ENCODE measurements at regions of chr14 and their contacts with region 1.

Region 1: GRCh38 chr14:70907176-70907995 is at the start of gene PCNX1:
- DNase-seq: peak; percentile 86
- ATAC-seq: peak; percentile 69
- H3K4me3 ChIP-seq: peak within 1 kb of the TSS; percentile 76
- H3K27ac ChIP-seq: peak within 1 kb of the TSS; percentile 21; the same call in 1 of the 2 replicates
- H3K4me1 ChIP-seq: peaks cover 19% of the 10 kb centered on the region
- H3K27me3 ChIP-seq: no peaks in the 10 kb centered on the region
- CTCF ChIP-seq: peak; percentile 82
- total RNA-seq, gene PCNX1: 21.5 and 23.3 TPM in 2 replicates

Region 2: GRCh38 chr14:70359181-70360090 is 548.0 kb before region 1 on chr14 and contains the start of gene COX16:
- CTCF ChIA-PET with region 1: no interaction called
- POLR2A ChIA-PET with region 1: no interaction called
- intact Hi-C with region 1: loop called (anchors 2 kb)
- DNase-seq: peak; percentile 96
- ATAC-seq: peak; percentile 93
- H3K4me3 ChIP-seq: peak within 1 kb of the TSS; percentile 88
- H3K27ac ChIP-seq: peak within 1 kb of the TSS; percentile 71
- H3K4me1 ChIP-seq: peaks cover 19% of the 10 kb centered on the region
- H3K27me3 ChIP-seq: no peaks in the 10 kb centered on the region
- CTCF ChIP-seq: no peak
- total RNA-seq, gene COX16: 54.1 and 60.1 TPM in 2 replicates

Region 3: GRCh38 chr14:70827396-70828151 is 79.8 kb before region 1 on chr14:
- CTCF ChIA-PET with region 1: interaction called, 7 read pairs
- POLR2A ChIA-PET with region 1: no interaction called
- intact Hi-C with region 1: loop called (anchors 1 kb)
- DNase-seq: peak; percentile 61
- ATAC-seq: peak; percentile 85
- H3K4me3 ChIP-seq: no peak overlapping the region
- H3K27ac ChIP-seq: no peak overlapping the region
- H3K4me1 ChIP-seq: 0 out of 2 replicates have a peak, but pooled peaks cover 2% of the 10 kb centered on the region
- H3K27me3 ChIP-seq: no peaks in the 10 kb centered on the region
- CTCF ChIP-seq: peak; percentile 49; the same call in 1 of the 2 replicates

Region 4: DNA sequence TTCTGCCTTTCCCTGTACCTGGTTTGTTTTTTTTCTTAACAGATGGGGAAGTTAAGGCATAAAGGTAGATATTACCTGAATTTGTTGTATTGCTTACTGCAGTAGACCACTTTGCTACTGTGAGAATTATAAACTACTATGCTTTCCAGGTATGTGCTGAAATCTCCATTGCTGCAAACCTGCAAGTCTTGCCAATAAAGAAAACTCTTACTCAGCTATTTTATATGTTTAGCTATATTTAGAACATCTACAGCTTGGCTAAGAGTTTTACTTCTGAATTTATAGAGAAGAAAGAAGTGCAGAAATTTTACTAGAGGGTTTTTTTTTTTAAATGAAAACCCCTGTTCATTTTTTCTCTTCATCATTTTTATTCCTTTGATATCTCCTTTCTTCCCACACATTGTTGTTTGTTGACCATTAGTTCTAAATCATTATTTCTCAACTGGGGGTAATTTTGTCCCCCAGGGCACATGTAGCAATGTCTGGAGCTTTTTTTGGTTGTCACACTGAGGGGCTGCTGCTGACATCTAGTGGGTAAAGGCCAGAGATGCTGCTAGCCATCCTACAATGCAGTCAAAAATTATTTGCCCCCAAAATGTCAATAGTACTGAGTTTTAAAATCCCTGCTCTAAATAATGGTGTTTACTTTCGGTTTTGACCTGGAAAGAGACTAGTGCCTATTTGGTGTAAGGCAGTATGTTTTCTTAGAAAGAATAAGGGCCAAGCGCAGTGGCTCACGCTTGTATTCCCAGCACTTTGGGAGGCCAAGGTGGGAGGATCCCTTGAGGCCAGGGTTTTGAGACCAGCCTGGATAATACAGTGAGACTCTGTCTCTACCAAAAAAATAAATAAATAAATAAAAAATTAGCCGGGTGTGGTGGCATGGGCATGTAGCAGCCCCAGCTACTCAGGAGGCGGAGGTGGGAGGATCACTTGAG is 48.4 kb after region 1 on chr14:
- CTCF ChIA-PET with region 1: interaction called, 41 read pairs
- POLR2A ChIA-PET with region 1: interaction called, 8 read pairs
- intact Hi-C with region 1: loop called (anchors 1 kb)
- DNase-seq: peak; percentile 44
- ATAC-seq: peak; percentile 92
- H3K4me3 ChIP-seq: no peak overlapping the region
- H3K27ac ChIP-seq: no peak overlapping the region
- H3K4me1 ChIP-seq: no peaks in the 10 kb centered on the region; the same call in 1 of the 2 replicates
- H3K27me3 ChIP-seq: no peaks in the 10 kb centered on the region
- CTCF ChIP-seq: peak; percentile 93

Region 5: GRCh38 chr14:71021347-71022014 is 114.1 kb after region 1 on chr14:
- CTCF ChIA-PET with region 1: no interaction called
- POLR2A ChIA-PET with region 1: interaction called, 4 read pairs
- intact Hi-C with region 1: loop called (anchors 5 kb)
- DNase-seq: peak; percentile 96
- ATAC-seq: peak; percentile 95
- H3K4me3 ChIP-seq: peak overlapping the region; percentile 27
- H3K27ac ChIP-seq: peak overlapping the region; percentile 84
- H3K4me1 ChIP-seq: peaks cover 22% of the 10 kb centered on the region
- H3K27me3 ChIP-seq: no peaks in the 10 kb centered on the region
- CTCF ChIP-seq: no peak

Region 6: DNA sequence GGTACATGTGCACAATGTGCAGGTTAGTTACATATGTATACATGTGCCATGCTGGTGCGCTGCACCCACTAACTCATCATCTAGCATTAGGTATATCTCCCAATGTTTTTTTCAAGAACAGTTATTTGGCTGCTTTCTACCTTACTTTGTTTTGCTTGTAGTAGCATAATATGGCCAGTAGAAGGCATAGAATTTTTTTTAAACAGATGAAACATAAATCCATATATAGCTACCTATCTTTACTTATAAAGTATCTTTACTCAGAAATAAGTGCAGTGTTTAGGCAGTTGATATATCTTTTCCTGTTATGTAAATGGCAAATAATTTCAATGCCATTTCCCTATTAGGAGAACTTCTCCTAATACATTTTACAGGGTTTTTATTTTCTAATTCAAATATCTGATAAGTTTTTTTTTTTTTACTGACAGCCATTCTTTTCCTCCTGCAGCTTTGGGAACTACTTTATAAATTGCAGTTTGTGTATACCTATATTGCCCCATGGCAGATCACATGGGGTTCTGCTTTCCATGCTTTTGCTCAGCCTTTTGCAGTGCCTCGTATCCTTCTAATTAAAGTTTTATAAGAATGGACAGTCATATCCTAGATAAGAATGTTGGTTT is 142.9 kb after region 1 on chr14:
- CTCF ChIA-PET with region 1: no interaction called
- POLR2A ChIA-PET with region 1: no interaction called
- intact Hi-C with region 1: no loop called
- DNase-seq: peak; percentile 49
- ATAC-seq: peak; percentile 82
- H3K4me3 ChIP-seq: no peak overlapping the region
- H3K27ac ChIP-seq: no peak overlapping the region
- H3K4me1 ChIP-seq: no peaks in the 10 kb centered on the region
- H3K27me3 ChIP-seq: no peaks in the 10 kb centered on the region
- CTCF ChIP-seq: peak; percentile 64

Measured in PC-3 (cell line).